Dendritic cell treated with granulocyte-macrophage colony-stimulating factor and Interleukin-4, amounts not matched to agents 40 ng/mL and 50 ng/mL, for 4 days (primary cell): ENCODE measurements at regions of chr1 and their contacts with region 1.

Region 1: DNA sequence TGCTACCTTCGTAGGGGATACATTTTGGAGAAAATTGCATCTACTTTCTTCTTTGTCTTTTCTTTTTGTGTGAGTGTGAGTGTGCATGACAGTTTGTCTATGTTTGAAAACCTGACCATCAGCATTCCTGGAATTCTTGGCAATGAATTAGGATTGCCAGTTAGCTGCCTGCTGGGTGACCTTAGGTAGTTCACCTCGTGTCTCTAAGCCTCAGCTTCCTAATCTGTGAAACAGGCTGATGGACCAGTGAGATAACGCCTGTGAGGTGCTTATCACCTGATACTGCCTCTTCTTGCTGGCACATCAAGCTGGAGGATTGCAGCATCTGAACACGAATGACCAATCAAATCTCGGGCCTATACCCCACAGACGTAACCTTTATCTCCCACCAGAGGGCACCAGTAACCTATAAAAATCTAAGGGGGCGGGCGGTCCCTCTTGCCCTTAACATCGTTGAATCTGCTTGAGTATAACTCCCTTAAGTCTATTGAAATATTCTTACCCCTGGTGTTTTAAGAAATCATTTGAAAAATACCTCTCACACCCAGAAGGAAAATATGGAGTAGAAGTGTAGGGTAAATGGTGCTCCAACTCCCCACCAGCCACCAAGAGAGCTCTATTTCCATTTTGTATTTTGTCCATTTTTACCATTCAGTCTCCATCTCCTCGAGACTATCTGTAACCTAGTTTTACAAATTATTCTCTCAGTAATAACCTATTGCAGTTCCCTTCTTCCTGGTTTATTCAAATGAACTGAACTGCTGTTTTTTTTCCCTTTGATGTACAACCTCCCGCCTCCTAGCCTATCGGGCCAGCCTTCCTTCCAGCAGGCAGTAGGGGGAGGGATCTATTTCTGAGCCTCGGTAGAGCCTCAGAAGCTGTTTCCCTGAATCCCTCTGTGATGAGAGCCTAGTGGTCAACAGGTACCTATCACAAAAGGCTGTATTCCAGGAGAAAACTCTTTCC is 49.7 kb downstream of the MDM4 start:
- H3K4me3 Mint-ChIP-seq: no peak overlapping the region
- H3K27ac Mint-ChIP-seq: no peak overlapping the region
- H3K4me1 Mint-ChIP-seq: no peaks in the 10 kb centered on the region
- H3K27me3 Mint-ChIP-seq: no peaks in the 10 kb centered on the region

Region 2: DNA sequence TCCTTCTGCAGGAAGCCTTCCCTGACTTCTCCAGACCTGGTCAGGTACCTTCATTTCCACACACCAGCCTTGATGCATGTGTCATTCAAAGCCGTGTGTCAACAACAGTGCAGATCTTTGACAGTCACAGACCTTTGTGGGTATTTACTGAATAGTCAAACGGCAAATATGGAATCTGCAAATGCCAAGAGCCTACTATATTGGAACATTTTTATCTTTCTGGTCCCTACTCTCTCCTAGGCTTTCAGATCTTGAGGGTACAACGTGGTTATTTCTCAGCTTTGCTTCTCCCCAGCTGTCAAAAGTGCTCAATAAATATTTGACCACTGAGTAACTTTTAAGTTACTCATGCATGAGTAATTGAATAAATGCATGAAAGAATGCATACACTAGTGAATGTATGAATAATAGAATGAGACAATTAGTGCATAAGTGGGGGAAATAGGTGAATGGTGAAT is 25.7 kb after region 1 on chr1:
- intact Hi-C with region 1: no loop called
- H3K4me3 Mint-ChIP-seq: no peak overlapping the region
- H3K27ac Mint-ChIP-seq: no peak overlapping the region
- H3K4me1 Mint-ChIP-seq: no peaks in the 10 kb centered on the region
- H3K27me3 Mint-ChIP-seq: no peaks in the 10 kb centered on the region

Region 3: GRCh38 chr1:204763706-204764427 is 198.0 kb after region 1 on chr1:
- intact Hi-C with region 1: loop called (anchors 5 kb)
- H3K4me3 Mint-ChIP-seq: no peak overlapping the region
- H3K27ac Mint-ChIP-seq: no peak overlapping the region
- H3K4me1 Mint-ChIP-seq: peaks cover 8% of the 10 kb centered on the region
- H3K27me3 Mint-ChIP-seq: peaks cover 26% of the 10 kb centered on the region

Region 4: DNA sequence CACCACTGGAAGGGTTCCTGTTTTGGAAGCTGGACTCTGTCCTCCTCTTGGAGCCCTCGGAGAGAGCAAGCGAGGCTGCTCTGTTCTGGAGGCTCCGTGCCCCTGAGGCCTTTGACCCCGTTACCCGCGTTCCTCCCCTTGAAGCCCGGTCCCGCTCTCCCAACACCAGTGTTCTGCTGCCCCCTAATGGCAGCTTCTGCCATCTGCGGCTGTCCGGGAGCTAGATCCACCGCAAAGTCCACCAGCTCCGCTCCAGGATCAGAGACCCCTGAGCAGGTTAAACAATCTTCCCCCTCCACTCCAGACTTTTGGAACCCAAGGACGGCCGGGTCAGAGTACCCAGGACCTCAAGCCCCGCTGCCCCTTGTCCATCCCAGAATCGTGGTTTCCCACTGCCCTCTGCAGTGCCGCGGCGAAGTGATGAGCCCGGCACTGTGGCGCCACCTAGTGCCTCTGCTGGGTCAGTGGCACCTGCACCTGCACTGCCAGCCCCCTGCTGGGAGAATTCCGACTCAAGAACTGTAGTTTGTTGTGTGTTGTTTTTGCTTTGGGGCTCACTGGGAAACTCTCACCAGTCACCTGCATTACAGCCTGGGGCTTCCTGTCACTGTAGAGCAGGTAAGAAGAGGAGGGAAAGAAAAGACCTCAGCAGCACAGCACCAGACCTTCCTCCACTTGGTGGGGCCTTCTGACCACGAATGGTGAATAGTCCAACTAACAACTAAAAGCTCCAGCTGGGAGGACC is 241.2 kb after region 1 on chr1:
- intact Hi-C with region 1: loop called (anchors 2 kb)
- H3K4me3 Mint-ChIP-seq: peak overlapping the region; percentile 78
- H3K27ac Mint-ChIP-seq: no peak overlapping the region
- H3K4me1 Mint-ChIP-seq: peaks cover 7% of the 10 kb centered on the region
- H3K27me3 Mint-ChIP-seq: peaks cover 12% of the 10 kb centered on the region